T-cell (primary cell): ENCODE measurements at regions of chrX and their contacts with region 1.

Region 1: DNA sequence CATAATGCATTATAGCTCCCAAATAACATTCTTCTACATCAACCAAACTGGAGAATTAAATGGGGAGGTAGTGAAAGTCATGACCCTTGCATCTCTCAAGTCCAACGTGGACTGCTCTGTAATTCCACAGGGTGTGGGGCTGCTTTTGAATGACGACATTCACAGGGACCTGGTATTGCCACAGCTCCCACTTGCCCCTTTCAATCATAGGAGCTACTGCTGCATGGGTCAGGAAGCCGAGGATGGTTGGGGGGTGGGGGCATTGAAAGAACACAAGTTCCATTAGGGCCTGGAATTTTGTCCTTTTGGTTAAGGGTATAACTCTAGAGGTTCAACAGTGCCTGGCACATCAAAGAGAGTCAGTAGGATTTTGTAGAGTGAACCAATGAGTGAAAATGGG is 7.4 kb upstream of the CT55 start:
- DNase-seq: no peak
- ATAC-seq: no peak
- H3K4me3 ChIP-seq: no peak overlapping the region
- H3K4me3 Mint-ChIP-seq: no peak overlapping the region
- H3K27ac ChIP-seq: no peak overlapping the region
- H3K27ac Mint-ChIP-seq: no peak overlapping the region
- H3K4me1 ChIP-seq: no peaks in the 10 kb centered on the region
- H3K4me1 Mint-ChIP-seq: no peaks in the 10 kb centered on the region
- H3K27me3 ChIP-seq: no peaks in the 10 kb centered on the region
- H3K27me3 Mint-ChIP-seq: peaks cover 5 to 36% of the 10 kb centered on the region in 2 donors

Region 2: DNA sequence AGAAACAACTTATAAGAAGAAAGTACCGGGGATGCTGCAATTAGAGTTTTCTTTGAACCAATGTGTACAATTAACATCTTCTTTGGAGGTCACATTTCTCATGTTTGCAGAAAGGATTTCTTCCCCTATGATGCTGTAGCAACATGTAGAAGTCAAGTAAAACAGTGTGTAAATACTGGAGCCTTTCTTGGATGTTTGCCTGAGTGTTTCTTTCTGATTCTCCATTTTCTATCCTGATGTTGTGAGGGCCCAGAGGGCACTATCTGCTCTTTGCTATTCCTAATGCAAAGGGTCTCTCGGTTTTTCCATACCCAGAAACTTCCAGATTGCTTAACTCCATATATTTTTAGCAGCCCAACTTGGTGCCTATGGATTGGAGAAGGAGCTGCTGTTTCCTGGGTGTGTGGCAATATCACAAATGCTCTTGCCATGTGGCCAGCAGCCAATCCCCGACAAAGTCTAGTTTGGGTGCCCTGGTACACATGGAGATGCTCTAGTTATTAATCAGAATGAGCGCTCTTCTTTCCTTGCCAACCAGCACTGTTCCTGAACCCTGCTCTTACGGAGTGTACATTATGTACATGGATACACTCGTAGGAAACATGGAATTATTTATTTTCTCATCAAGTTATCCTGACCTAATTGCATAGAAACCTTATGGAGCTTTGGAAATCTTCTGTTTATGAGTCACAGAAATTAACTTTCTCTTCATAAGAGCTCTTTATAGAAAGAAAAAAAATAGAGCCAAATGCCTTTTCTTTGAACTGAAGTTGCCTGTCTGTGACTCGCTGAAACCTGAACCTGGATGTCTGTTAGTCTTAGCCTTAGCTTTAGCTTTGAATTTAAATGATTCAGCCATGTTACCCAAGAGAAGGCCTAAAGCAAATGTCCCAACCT is 1696.3 kb before region 1 on chrX:
- CTCF ChIA-PET with region 1: no interaction called
- POLR2A ChIA-PET with region 1: no interaction called
- DNase-seq: no peak
- ATAC-seq: no peak
- H3K4me3 ChIP-seq: no peak overlapping the region
- H3K4me3 Mint-ChIP-seq: no peak overlapping the region
- H3K27ac ChIP-seq: no peak overlapping the region
- H3K27ac Mint-ChIP-seq: no peak overlapping the region
- H3K4me1 ChIP-seq: no peaks in the 10 kb centered on the region
- H3K4me1 Mint-ChIP-seq: no peaks in the 10 kb centered on the region
- H3K27me3 ChIP-seq: no peaks in the 10 kb centered on the region
- H3K27me3 Mint-ChIP-seq: peaks cover 0 to 27% of the 10 kb centered on the region in 2 donors

Region 3: GRCh38 chrX:134948333-134949241 is 230.0 kb before region 1 on chrX:
- CTCF ChIA-PET with region 1: no interaction called
- POLR2A ChIA-PET with region 1: no interaction called
- DNase-seq: no peak
- ATAC-seq: no peak
- H3K4me3 ChIP-seq: no peak overlapping the region
- H3K4me3 Mint-ChIP-seq: no peak overlapping the region
- H3K27ac ChIP-seq: no peak overlapping the region
- H3K27ac Mint-ChIP-seq: no peak overlapping the region
- H3K4me1 ChIP-seq: no peaks in the 10 kb centered on the region
- H3K4me1 Mint-ChIP-seq: no peaks in the 10 kb centered on the region
- H3K27me3 ChIP-seq: no peaks in the 10 kb centered on the region
- H3K27me3 Mint-ChIP-seq: peaks cover 0 to 6% of the 10 kb centered on the region in 2 donors

Region 4: DNA sequence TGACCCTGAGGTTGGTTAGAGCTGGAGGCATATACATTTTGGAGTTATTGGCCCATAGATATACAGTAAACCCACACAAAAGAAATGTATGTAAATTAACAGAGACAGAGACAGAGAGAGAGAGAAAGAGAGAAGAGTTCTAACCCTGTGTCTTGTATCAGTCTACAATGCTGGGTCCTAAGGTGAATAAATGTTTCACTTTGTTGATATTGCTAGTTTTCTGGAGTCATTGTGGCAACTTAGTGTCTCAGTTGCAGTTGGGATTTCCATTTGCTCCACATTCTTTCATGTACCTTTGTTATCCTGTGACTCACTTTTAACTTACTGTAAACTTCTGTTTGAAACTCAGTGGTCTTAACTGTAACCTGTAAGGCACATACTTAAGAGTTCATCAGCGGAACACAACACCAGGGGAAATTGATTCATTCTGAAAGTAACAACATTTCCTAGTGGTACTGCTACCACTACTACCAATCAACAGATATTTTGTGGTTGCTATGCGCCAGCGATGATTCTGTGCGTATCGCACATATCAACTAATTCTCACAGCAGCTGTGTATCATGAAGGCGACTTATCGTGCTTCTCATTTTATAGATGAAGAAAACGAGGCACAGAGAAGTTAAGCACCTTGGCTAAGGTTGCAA is 34.7 kb after region 1 on chrX:
- CTCF ChIA-PET with region 1: no interaction called
- POLR2A ChIA-PET with region 1: no interaction called
- DNase-seq: peak in 2 of 35 experiments; percentile 2 to 11
- ATAC-seq: peak in 2 of 4 experiments; percentile 40 to 56
- H3K4me3 ChIP-seq: no peak overlapping the region
- H3K4me3 Mint-ChIP-seq: no peak overlapping the region
- H3K27ac ChIP-seq: no peak overlapping the region
- H3K27ac Mint-ChIP-seq: no peak overlapping the region
- H3K4me1 ChIP-seq: no peaks in the 10 kb centered on the region
- H3K4me1 Mint-ChIP-seq: peaks cover 0 to 3% (median 0%) of the 10 kb centered on the region in 3 donors
- H3K27me3 ChIP-seq: no peaks in the 10 kb centered on the region
- H3K27me3 Mint-ChIP-seq: peaks cover 1 to 31% of the 10 kb centered on the region in 2 donors

Region 5: GRCh38 chrX:135302269-135302873 is 123.7 kb after region 1 on chrX:
- CTCF ChIA-PET with region 1: no interaction called
- POLR2A ChIA-PET with region 1: no interaction called
- DNase-seq: no peak
- ATAC-seq: no peak
- H3K4me3 ChIP-seq: no peak overlapping the region
- H3K4me3 Mint-ChIP-seq: no peak overlapping the region
- H3K27ac ChIP-seq: no peak overlapping the region
- H3K27ac Mint-ChIP-seq: no peak overlapping the region
- H3K4me1 ChIP-seq: no peaks in the 10 kb centered on the region
- H3K4me1 Mint-ChIP-seq: peaks cover 0 to 5% (median 0%) of the 10 kb centered on the region in 3 donors
- H3K27me3 ChIP-seq: no peaks in the 10 kb centered on the region
- H3K27me3 Mint-ChIP-seq: peaks cover 0 to 15% of the 10 kb centered on the region in 2 donors

Region 6: DNA sequence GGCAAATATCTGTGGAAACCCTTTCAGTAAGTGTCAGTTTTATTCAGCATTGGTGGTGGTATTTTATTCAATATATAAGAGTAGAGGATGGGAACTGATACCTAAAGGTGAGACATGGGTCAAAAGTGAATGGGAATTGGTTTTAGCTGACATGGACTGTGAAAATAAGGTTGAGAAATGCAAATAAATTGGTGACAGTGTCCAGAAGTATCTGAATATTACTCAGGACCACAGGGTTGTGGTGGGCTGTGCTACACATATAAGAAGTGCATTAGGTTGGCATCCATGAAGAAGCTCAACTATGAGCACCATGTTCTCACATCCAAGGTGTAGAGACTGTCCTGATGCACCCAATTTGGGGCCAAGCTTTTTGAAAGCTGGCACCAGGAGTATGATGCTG is 175.7 kb after region 1 on chrX:
- CTCF ChIA-PET with region 1: interaction called in 1 of 2 experiments, 10 read pairs
- POLR2A ChIA-PET with region 1: no interaction called
- DNase-seq: no peak
- ATAC-seq: no peak
- H3K4me3 ChIP-seq: no peak overlapping the region
- H3K4me3 Mint-ChIP-seq: no peak overlapping the region
- H3K27ac ChIP-seq: no peak overlapping the region
- H3K27ac Mint-ChIP-seq: no peak overlapping the region
- H3K4me1 ChIP-seq: no peaks in the 10 kb centered on the region
- H3K4me1 Mint-ChIP-seq: peaks cover 0 to 6% (median 2%) of the 10 kb centered on the region in 3 donors
- H3K27me3 ChIP-seq: no peaks in the 10 kb centered on the region
- H3K27me3 Mint-ChIP-seq: peaks cover 0 to 9% of the 10 kb centered on the region in 2 donors